Stomach (tissue), 19 donors: ENCODE measurements at regions of chr13 and their contacts with region 1.

Region 1: DNA sequence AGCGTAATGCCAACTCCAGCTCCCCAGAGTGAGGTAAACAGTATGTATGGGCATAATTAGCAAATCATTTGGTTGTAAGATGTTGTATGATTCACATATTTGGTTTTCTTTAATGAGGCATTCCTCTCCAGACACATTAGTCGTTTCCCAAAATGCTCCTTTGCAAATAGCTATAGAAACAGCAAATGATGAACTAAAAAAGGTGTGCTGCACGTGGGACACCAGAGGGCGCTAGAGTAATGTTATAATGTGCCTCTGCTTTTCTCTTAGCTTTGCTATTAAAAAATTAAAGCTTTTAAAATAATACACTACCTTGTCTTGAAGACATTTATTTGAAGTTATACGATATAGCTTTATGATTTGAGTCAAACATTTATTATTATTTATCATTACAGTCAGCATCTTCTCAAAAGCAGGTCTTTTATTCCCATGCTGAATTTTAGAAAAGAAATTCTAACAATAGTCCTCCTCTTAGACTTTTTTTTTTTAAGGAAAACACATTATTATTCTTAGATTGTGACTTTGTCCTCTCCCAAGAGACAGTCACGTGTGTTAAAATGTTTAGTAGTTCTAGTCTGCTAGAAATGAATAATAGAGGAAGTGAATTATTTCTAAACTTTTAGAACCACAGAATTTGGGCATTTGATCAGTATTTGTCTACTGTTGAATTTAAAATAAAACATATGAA is 121.6 kb upstream of the FRY start:
- DNase-seq: peak; percentile 53 to 91
- H3K4me3 ChIP-seq: no peak overlapping the region
- H3K27ac ChIP-seq: peak overlapping the region in 1 of 5 donors; percentile 22
- H3K4me1 ChIP-seq: peaks cover 0 to 46% (median 8%) of the 10 kb centered on the region in 4 donors
- H3K27me3 ChIP-seq: no peaks in the 10 kb centered on the region
- CTCF ChIP-seq: peak in 5 of 7 experiments; percentile 69 to 84 (median 81)
- EP300 ChIP-seq: no peak
- POLR2A ChIP-seq: no peak

Region 2: DNA sequence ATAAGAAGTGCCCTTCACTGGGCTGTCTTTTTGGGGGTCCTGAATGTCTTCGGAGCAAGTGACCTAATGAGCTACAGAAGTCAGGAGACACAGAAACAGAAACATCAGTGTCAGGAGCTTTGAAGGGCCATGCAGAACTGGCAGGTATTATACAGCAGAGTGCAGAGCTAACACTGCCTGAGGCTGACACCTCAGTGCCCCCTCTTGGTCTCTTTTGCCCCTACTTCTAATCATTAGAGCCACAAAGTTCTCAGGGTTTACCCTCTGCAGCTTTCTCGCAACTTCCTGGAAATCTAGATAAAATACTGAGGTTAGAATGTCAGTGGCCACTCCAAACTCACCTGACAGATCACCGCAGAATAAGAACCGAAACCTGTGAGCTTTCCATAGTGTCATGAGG is 537.6 kb before region 1 on chr13:
- intact Hi-C with region 1: no loop called
- DNase-seq: no peak
- H3K4me3 ChIP-seq: no peak overlapping the region
- H3K27ac ChIP-seq: no peak overlapping the region
- H3K4me1 ChIP-seq: no peaks in the 10 kb centered on the region
- H3K27me3 ChIP-seq: no peaks in the 10 kb centered on the region
- CTCF ChIP-seq: no peak
- EP300 ChIP-seq: no peak
- POLR2A ChIP-seq: no peak

Region 3: GRCh38 chr13:31775686-31776085 is 134.3 kb before region 1 on chr13:
- intact Hi-C with region 1: no loop called
- DNase-seq: peak in 1 of 2 donors; percentile 13
- H3K4me3 ChIP-seq: no peak overlapping the region
- H3K27ac ChIP-seq: no peak overlapping the region
- H3K4me1 ChIP-seq: peaks cover 0 to 9% (median 3%) of the 10 kb centered on the region in 4 donors
- H3K27me3 ChIP-seq: no peaks in the 10 kb centered on the region
- CTCF ChIP-seq: no peak
- EP300 ChIP-seq: no peak
- POLR2A ChIP-seq: no peak

Region 4: DNA sequence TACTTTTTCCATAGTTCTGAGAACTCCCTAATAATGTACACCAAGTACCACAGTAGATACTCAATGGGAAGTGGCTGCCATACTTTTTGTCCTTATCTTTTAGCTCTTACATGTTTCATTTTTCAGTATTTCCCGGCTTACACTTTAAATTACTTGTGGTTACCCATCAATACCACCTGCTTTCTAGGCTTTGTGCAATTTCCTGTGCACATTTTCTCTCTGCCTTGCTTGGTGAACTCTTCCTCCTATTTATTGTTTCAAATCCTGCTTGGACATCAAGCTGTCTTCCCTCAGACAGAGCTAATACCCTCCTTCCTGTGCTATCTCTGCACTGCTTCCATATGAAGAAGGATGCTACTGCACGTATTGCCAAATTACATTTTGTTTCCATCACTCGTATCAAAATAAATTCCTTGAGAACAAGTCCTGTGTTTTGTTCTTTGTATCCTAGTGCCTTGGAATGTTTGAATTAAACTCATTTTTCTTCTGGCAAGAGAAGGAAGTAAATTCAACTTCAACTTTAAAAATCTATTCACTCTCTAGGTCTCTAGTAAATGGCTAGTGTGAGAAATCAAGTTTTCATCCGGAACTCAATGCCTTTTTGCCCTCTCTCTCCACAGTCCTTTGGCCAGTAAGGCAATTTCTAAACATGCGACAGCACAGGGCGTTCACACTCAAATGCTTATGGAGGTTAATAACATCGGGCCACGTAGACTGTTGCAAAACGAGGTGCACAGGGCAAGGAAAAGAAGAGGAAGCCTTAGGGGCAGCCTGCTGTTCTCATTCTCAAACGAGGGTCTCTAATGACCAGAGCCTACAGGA is 399.5 kb after region 1 on chr13:
- intact Hi-C with region 1: loop called (anchors 10 kb)
- DNase-seq: peak in 1 of 2 donors; percentile 27
- H3K4me3 ChIP-seq: peak overlapping the region; percentile 9 to 29 (median 23)
- H3K27ac ChIP-seq: peak overlapping the region in 4 of 5 donors; percentile 14 to 57 (median 41)
- H3K4me1 ChIP-seq: peaks cover 5 to 9% (median 8%) of the 10 kb centered on the region in 4 donors
- H3K27me3 ChIP-seq: no peaks in the 10 kb centered on the region
- CTCF ChIP-seq: no peak
- EP300 ChIP-seq: no peak
- POLR2A ChIP-seq: no peak